Panc1 (cell line): ENCODE measurements at regions of chr19 and their contacts with region 1.

Region 1: GRCh38 chr19:13284929-13285928 is 135.0 kb downstream of the IER2 start:
- DNase-seq: no peak
- ATAC-seq: no peak
- H3K4me3 ChIP-seq: no peak overlapping the region
- H3K27ac ChIP-seq: no peak overlapping the region
- H3K4me1 ChIP-seq: no peaks in the 10 kb centered on the region; the same call in 1 of the 2 replicates
- H3K27me3 ChIP-seq: no peaks in the 10 kb centered on the region
- CTCF ChIP-seq: no peak

Region 2: DNA sequence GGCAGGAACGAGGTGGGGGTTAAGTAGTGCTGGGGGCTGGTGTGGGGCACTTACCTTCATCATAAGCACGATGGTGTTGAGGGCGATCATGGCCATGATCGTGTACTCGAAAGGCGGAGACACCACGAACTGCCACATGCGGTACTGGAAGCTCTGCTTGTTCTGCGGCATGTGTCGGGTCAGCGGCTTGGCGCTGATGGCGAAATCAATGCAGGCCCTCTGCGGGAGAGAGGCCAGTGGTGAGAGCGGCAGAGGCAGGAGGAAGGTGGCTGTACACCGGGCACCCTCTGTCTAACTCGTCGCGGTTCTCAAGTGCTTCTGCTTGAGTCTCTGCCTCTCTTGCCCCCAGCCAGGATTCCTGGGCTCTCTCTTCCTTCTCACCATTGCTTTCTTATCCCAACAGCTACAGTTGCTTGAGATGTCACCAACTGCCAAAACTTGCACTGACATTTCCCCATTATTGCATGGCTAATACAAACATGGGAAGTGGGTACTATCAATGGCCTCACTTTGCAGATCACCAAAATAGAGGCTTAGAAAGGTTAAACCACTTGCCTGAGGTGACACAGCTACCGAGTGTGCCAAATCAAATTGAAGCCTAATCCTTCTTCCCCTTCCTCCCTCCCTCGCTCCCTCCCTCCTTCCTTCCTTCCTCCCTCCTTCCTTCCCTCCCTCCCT is 30.0 kb before region 1 on chr19:
- CTCF ChIA-PET with region 1: no interaction called
- POLR2A ChIA-PET with region 1: no interaction called
- in situ Hi-C with region 1: no loop called
- intact Hi-C with region 1: no loop called
- DNase-seq: no peak
- ATAC-seq: no peak
- H3K4me3 ChIP-seq: no peak overlapping the region
- H3K27ac ChIP-seq: no peak overlapping the region
- H3K4me1 ChIP-seq: no peaks in the 10 kb centered on the region
- H3K27me3 ChIP-seq: no peaks in the 10 kb centered on the region
- CTCF ChIP-seq: no peak

Region 3: DNA sequence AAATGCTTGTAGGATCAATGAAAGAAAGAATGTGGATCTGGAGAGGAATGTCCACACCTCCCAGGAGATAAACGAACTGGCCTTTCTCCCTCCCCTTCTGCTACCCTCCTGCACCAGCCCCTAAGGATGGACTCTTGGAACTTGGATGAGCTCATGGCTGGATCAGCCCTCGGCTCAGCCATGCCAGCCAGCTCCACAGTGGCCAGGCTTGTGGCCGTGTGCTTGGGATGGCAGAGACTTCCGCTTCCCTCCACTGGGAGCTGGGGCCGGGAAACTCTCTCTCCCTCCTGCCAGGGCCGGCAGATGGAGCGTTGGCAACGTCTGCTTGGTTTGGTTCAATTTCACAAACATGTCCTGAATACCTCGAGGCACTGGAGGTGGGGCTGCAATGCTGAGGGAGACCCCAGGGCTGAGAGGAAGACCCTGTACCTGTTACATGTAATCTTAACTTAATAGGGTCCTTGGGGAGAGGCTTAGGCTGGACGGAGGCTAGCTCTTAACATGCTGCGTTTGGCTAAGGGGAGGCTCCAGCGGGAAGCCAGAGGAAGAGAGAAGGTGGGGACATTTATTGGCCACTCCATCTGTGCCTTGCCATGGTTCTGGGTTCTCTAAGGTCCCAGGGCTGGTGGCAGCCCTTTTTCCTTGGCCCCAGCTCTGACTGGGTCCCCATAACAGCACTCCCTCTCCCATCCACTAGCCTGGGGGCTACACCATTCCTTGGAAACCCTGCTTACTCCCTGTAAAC is 17.5 kb after region 1 on chr19:
- CTCF ChIA-PET with region 1: no interaction called
- POLR2A ChIA-PET with region 1: no interaction called
- in situ Hi-C with region 1: no loop called
- intact Hi-C with region 1: no loop called
- DNase-seq: no peak
- ATAC-seq: peak; percentile 65; the same call in 1 of the 2 replicates
- H3K4me3 ChIP-seq: no peak overlapping the region
- H3K27ac ChIP-seq: no peak overlapping the region
- H3K4me1 ChIP-seq: no peaks in the 10 kb centered on the region
- H3K27me3 ChIP-seq: no peaks in the 10 kb centered on the region
- CTCF ChIP-seq: no peak

Region 4: GRCh38 chr19:14300303-14300702 is 1015.1 kb after region 1 on chr19:
- CTCF ChIA-PET with region 1: no interaction called
- POLR2A ChIA-PET with region 1: interaction called, 10 read pairs
- in situ Hi-C with region 1: no loop called
- intact Hi-C with region 1: no loop called
- DNase-seq: no peak
- ATAC-seq: no peak
- H3K4me3 ChIP-seq: no peak overlapping the region
- H3K27ac ChIP-seq: no peak overlapping the region
- H3K4me1 ChIP-seq: no peaks in the 10 kb centered on the region
- H3K27me3 ChIP-seq: no peaks in the 10 kb centered on the region
- CTCF ChIP-seq: no peak